ENCODE measurements at regions of chr20 and their contacts with region 1.

Region 1: GRCh38 chr20:41693136-41693979 is 75.2 kb upstream of the CHD6 start:
- DNase-seq: peak; percentile 96
- H3K4me3 ChIP-seq: peak overlapping the region; percentile 79
- H3K27ac ChIP-seq: peak overlapping the region; percentile 92
- H3K4me1 ChIP-seq: peaks cover 16% of the 10 kb centered on the region
- CTCF ChIP-seq: peak; percentile 85

Region 2: DNA sequence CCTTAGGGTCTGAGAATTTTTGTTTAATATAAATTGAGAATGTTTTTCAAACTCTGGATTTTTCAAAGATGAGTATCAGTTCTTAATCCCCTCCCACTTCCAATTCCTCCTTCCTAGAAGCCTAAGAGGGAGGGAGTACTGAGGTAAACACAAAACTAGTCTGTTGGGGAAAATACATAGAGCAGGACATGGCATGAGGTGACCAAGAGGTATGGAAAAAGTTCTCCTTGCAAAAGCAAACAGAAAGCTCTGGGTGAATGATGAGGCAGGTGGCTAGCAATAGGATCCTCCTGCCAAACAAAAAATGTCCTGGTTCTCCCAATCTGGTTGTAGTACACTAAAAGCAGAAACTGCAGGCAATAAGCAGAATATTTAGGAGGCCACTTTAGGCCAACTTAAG is 124.5 kb before region 1 on chr20:
- CTCF ChIA-PET with region 1: no interaction called
- POLR2A ChIA-PET with region 1: no interaction called
- intact Hi-C with region 1: loop called (anchors 5 kb)
- DNase-seq: no peak
- H3K4me3 ChIP-seq: no peak overlapping the region
- H3K27ac ChIP-seq: no peak overlapping the region
- H3K4me1 ChIP-seq: peaks cover 8% of the 10 kb centered on the region
- CTCF ChIP-seq: no peak

Region 3: DNA sequence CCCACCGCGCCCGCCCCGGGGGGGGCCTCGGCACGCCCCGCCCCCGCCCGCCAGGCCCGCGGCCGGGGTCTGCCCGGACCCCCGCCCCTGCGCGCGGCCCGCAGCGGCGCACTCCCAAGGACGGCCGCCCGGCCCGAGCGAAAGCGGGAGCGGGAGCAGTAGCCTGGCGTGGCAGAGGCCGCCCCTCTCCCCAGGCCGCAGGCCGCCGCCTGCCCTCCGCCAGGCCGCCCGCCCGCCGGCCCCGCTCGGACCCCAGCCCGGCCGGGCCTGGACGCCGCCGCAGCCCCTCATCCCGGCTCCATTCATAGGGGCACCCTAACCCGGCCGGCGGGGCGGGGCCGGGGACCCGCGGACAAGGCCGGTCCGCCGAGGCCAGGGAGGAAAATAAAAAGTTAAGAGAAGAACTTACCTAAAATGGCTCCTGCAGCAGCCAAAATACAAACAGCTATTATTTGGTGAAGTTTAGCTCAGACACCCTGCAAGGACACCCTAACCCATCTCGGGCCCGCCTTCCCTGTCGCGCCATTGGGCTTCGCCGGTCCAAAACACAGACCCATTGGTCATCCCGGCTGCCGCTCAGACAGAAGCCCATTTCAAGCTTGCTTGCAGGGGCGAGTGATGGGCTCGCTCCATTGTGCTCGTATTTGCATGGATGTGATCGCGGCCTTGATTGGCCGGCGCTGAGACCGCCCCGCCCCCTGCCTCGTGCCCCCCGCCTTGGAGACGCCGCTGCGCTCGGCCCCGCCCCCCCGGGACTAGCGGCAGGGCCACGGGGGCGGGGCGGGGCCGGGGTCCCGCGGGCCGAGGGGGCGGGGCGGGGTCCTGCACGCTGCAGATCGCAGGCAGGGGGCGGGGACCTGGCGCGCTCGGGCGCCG is 75.2 kb before region 1 on chr20 and contains the start of gene CHD6:
- CTCF ChIA-PET with region 1: interaction called, 3 read pairs
- POLR2A ChIA-PET with region 1: interaction called, 5 read pairs
- intact Hi-C with region 1: loop called (anchors 2 kb)
- DNase-seq: peak; percentile 100
- H3K4me3 ChIP-seq: peak within 1 kb of the TSS; percentile 91
- H3K27ac ChIP-seq: peak within 1 kb of the TSS; percentile 52
- H3K4me1 ChIP-seq: peaks cover 13% of the 10 kb centered on the region
- CTCF ChIP-seq: no peak
- total RNA-seq, gene CHD6: 26.9 and 38.6 TPM in 2 replicates

Measured in OCI-LY7 (cell line).